HCT116 (cell line): ENCODE measurements at regions of chr14 and their contacts with region 1.

Region 1: GRCh38 chr14:89155491-89155890 is 261.5 kb downstream of the FOXN3 start:
- DNase-seq: no peak
- ATAC-seq: no peak
- H3K4me3 ChIP-seq: no peak overlapping the region
- H3K27ac ChIP-seq: no peak overlapping the region
- H3K4me1 ChIP-seq: no peaks in the 10 kb centered on the region
- H3K27me3 ChIP-seq: no peaks in the 10 kb centered on the region
- CTCF ChIP-seq: no peak
- POLR2A ChIP-seq: no peak
- RAD21 ChIP-seq: no peak

Region 2: GRCh38 chr14:88218119-88218915 is 937.2 kb before region 1 on chr14:
- CTCF ChIA-PET with region 1: no interaction called
- POLR2A ChIA-PET with region 1: no interaction called
- RAD21 ChIA-PET with region 1: no interaction called
- intact Hi-C with region 1: no loop called
- DNase-seq: no peak
- ATAC-seq: no peak
- H3K4me3 ChIP-seq: no peak overlapping the region
- H3K27ac ChIP-seq: no peak overlapping the region
- H3K4me1 ChIP-seq: no peaks in the 10 kb centered on the region
- H3K27me3 ChIP-seq: no peaks in the 10 kb centered on the region
- CTCF ChIP-seq: no peak
- POLR2A ChIP-seq: no peak
- RAD21 ChIP-seq: no peak

Region 3: GRCh38 chr14:89171628-89172027 is 16.1 kb after region 1 on chr14:
- CTCF ChIA-PET with region 1: no interaction called
- POLR2A ChIA-PET with region 1: no interaction called
- RAD21 ChIA-PET with region 1: no interaction called
- intact Hi-C with region 1: loop called (anchors 1 kb)
- DNase-seq: no peak
- ATAC-seq: no peak
- H3K4me3 ChIP-seq: no peak overlapping the region
- H3K27ac ChIP-seq: no peak overlapping the region
- H3K4me1 ChIP-seq: no peaks in the 10 kb centered on the region
- H3K27me3 ChIP-seq: no peaks in the 10 kb centered on the region
- CTCF ChIP-seq: no peak
- POLR2A ChIP-seq: no peak
- RAD21 ChIP-seq: no peak

Region 4: DNA sequence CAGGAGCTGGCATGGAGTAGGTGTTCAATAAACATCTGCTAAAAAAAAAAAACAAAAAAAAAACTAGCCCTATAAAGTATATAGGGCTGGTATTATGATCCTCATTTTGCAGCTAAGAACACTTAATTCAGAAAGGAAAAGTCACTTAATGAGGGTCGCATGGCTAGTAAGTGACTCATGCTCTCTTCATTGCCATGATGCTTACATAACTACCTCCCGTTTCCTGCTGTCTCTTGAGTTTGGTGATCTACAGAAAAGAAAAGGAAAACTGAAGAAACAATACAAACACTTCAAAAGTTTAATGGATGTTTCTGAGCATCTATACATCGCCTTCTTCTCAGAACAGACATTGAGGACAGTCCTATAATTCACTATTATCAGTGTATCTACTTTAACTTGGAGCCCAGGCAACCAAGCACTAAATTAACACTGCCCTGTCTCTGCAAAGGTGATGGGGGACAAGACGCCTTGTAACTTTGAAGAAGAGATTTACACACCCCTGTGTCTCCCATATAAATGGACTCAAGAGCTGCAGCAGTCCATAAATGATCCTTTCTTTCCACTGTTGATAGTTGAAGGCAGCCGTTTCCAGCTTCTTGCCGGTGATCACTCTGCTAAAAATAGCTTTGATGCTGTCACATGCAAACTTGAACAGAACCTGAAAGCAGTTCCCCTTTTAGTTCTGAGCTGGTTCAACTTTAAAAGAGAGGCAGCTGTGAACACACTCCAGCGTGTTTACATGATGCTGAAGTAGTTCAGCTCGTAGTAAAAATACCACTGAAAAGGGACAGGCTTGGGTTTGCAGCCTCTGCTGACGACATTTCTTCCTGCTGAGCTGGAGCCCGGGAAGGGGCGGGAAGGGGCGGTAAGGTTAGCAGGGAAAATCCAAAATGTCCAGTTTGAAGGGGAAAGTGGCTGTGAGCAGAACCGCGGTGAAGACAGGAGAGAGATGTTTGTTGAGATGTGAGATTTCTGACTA is 148.3 kb after region 1 on chr14:
- CTCF ChIA-PET with region 1: no interaction called
- POLR2A ChIA-PET with region 1: no interaction called
- RAD21 ChIA-PET with region 1: no interaction called
- intact Hi-C with region 1: no loop called
- DNase-seq: no peak
- ATAC-seq: peak; percentile 38; the same call in 1 of the 2 replicates
- H3K4me3 ChIP-seq: peak overlapping the region in 1 of 2 experiments; percentile 34; a peak in 2 of 4 replicates
- H3K27ac ChIP-seq: no peak overlapping the region
- H3K4me1 ChIP-seq: peaks cover 32 to 45% of the 10 kb centered on the region in 2 experiments
- H3K27me3 ChIP-seq: no peaks in the 10 kb centered on the region
- CTCF ChIP-seq: no peak
- POLR2A ChIP-seq: no peak
- RAD21 ChIP-seq: no peak